ENCODE measurements at regions of chr10 and their contacts with region 1.

Region 1: DNA sequence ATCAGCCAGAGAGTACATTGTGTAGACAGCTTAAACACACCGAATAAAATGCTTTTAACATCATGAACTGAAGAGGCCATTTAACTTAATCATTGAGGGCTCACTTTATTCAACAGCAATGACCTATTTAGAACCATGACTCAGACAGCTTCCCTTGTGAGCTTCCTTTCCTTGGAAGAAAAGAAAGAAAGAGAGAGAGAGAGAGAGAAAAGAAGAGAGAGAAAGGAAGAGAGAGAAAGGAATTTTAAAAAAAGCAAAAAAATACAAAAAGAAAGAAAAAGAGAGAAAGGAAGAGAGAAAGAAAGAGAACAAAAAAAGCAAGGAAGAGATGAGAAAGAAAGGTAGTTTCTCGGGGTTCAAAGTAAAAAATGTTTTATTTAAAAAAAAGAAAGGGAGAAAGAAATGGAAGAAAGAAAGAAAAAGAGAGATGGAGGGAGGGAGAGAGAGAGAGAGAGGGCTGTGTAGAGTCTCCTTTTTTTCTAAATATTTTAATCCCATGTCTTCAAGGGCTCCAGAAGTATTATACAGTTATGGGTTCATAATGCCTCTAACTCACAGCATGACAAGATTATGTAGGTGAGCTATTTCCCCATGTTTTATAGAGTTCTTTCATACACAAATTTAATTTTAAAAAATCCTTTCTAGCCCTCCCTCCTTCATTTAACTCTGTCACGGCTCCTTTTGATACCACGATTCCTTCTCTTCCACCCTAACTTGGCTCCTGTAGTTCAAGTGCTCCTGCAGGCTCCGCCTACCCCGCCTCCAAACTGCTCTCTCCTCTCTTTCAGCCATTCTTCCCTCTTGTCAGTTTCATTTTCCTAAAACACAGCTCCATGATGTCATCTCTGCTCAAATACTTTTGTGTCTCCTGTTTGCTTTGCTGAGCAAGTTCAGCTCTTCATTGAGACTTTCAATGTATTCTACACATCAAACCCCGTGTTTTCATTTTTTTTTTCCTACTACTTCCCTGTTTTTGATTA is 85.5 kb downstream of the PRTFDC1 start:
- DNase-seq: no peak
- ATAC-seq: no peak
- H3K4me3 ChIP-seq: no peak overlapping the region
- H3K4me3 Mint-ChIP-seq: peak overlapping the region in 2 of 10 donors; percentile 17 to 21
- H3K27ac ChIP-seq: no peak overlapping the region
- H3K27ac Mint-ChIP-seq: peak overlapping the region in 5 of 9 donors; percentile 5 to 62 (median 41)
- H3K4me1 ChIP-seq: no peaks in the 10 kb centered on the region
- H3K4me1 Mint-ChIP-seq: peaks cover 8 to 41% (median 32%) of the 10 kb centered on the region in 7 donors
- H3K27me3 ChIP-seq: no peaks in the 10 kb centered on the region
- H3K27me3 Mint-ChIP-seq: peaks cover 0 to 5% (median 0%) of the 10 kb centered on the region in 5 donors

Region 2: GRCh38 chr10:24771941-24772694 is 94.8 kb before region 1 on chr10:
- CTCF ChIA-PET with region 1: no interaction called
- POLR2A ChIA-PET with region 1: no interaction called
- intact Hi-C with region 1: no loop called
- DNase-seq: no peak
- ATAC-seq: no peak
- H3K4me3 ChIP-seq: no peak overlapping the region
- H3K4me3 Mint-ChIP-seq: no peak overlapping the region
- H3K27ac ChIP-seq: no peak overlapping the region
- H3K27ac Mint-ChIP-seq: no peak overlapping the region
- H3K4me1 ChIP-seq: no peaks in the 10 kb centered on the region
- H3K4me1 Mint-ChIP-seq: peaks cover 2 to 19% (median 15%) of the 10 kb centered on the region in 7 donors
- H3K27me3 ChIP-seq: no peaks in the 10 kb centered on the region
- H3K27me3 Mint-ChIP-seq: peaks cover 0 to 2% (median 0%) of the 10 kb centered on the region in 5 donors

Region 3: DNA sequence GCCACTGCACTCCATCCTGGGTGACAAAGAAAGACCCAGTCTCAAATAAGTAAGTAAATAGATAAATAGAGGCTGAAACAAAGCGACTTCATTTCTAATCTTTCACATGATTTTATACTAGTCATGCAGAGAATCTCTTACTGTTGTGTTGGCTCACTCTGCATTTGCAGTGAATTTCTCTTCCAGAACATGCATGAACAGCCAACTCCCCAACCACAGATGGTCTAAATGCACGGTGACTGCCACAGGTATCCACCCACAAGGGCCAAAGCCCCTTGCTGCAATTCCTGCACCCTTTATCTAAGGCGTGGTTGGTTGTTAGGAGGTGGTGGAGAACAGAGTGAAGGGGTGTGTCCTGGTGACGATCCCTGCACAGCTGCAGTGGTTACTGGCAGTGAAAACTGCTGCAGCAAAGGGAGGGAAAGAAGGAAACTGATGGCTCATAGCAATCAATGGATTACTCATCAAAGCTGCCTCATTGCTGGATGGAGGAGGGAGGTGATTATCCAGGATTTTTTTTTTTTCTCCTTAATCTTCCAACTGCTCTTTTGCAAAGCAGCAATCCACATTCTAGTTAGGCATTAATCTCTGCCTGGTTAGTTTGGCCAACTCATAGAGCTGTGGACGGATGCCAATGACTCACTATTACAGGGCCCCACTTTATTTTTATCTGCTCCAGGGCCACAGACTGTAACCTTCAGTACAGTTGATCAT is 34.9 kb after region 1 on chr10:
- CTCF ChIA-PET with region 1: no interaction called
- POLR2A ChIA-PET with region 1: no interaction called
- intact Hi-C with region 1: loop called in 1 of 2 experiments (anchors 5 kb)
- DNase-seq: no peak
- ATAC-seq: peak; percentile 42
- H3K4me3 ChIP-seq: no peak overlapping the region
- H3K4me3 Mint-ChIP-seq: peak overlapping the region in 2 of 10 donors; percentile 9 to 24
- H3K27ac ChIP-seq: no peak overlapping the region
- H3K27ac Mint-ChIP-seq: peak overlapping the region in 5 of 9 donors; percentile 12 to 68 (median 43)
- H3K4me1 ChIP-seq: peaks cover 14 to 22% of the 10 kb centered on the region in 2 donors
- H3K4me1 Mint-ChIP-seq: peaks cover 19 to 40% (median 29%) of the 10 kb centered on the region in 7 donors
- H3K27me3 ChIP-seq: no peaks in the 10 kb centered on the region
- H3K27me3 Mint-ChIP-seq: no peaks in the 10 kb centered on the region

Region 4: DNA sequence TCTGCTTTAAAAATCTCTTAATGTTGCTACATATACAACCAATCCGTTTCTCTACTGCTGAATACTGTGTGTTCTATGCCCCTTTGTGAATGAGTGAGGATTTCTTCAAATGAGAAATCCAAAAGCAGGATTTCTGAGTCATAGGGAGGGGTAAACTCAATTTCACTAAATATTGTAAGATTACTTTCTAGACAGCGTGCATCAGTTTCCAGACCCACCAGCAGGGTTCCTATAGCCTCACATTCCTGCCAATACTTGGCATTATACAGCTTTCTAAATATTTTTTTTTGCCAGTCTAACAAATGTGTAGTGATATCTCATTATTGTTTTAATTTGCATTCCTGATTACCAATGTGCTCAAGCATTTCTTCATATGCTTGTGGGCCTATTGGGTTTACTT is 343.4 kb after region 1 on chr10:
- CTCF ChIA-PET with region 1: no interaction called
- POLR2A ChIA-PET with region 1: no interaction called
- intact Hi-C with region 1: no loop called
- DNase-seq: no peak
- ATAC-seq: no peak
- H3K4me3 ChIP-seq: no peak overlapping the region
- H3K4me3 Mint-ChIP-seq: no peak overlapping the region
- H3K27ac ChIP-seq: no peak overlapping the region
- H3K27ac Mint-ChIP-seq: no peak overlapping the region
- H3K4me1 ChIP-seq: no peaks in the 10 kb centered on the region
- H3K4me1 Mint-ChIP-seq: no peaks in the 10 kb centered on the region
- H3K27me3 ChIP-seq: no peaks in the 10 kb centered on the region
- H3K27me3 Mint-ChIP-seq: peaks cover 0 to 19% (median 3%) of the 10 kb centered on the region in 5 donors

Measured in naive thymus-derived CD4-positive, alpha-beta T cell (primary cell).